Activated CD4-positive, alpha-beta memory T cell treated with anti-CD3 and anti-CD28 coated beads, Interleukin-2, amount 10 ng/mL, durations not matched to agents 7 days and 5 days (primary cell): ENCODE measurements at regions of chr1 and their contacts with region 1.

Region 1: DNA sequence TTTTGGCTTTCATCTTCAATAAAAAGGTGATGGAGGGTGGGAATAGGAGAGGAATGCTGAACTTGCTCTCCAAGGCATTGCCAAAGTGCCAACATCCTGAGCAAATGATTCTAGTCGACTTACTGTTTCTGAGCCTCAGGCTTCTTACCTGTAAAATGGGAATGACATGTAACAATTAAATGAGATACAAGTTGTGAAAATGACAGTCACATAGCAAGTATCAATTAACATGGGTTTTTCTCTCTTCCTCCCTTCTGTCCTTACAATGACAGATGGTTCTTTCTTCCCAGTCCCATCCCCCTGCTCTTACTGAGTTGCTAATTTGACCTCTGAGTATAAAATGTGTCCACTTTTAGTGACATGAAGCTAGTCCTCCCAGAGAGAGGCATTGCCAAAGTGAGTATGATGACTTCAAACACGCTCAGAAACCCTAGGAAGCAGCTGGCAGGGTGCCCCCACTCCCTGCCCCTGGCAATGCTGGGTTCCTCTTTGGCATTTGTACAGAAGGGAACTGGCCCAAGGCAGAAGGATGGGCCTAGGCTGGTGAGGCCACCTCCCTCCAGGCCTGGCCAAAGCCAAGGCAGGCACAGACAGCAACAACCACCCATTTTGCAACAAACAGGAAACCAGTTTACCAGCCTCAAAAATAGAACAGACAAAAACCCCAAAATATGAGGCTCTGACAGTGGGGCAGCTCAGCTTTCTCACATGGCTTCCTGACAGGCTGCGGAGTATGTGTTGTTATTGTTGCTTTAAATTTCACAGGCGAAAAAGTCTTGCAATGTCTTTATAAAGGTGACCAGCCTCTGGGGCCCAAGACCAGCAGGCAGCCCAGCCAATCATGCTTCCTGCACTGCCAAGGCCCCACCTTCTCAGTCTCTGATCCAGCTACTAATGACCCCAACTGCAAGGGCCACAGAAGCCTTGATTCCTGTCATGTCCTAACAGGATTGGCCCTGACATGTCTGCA is 115.9 kb downstream of the HIVEP3 start:
- DNase-seq: peak; percentile 61
- H3K4me3 Mint-ChIP-seq: peak overlapping the region; percentile 33
- H3K27ac Mint-ChIP-seq: peak overlapping the region; percentile 89
- H3K4me1 Mint-ChIP-seq: peaks cover 91% of the 10 kb centered on the region
- H3K27me3 Mint-ChIP-seq: no peaks in the 10 kb centered on the region

Region 2: DNA sequence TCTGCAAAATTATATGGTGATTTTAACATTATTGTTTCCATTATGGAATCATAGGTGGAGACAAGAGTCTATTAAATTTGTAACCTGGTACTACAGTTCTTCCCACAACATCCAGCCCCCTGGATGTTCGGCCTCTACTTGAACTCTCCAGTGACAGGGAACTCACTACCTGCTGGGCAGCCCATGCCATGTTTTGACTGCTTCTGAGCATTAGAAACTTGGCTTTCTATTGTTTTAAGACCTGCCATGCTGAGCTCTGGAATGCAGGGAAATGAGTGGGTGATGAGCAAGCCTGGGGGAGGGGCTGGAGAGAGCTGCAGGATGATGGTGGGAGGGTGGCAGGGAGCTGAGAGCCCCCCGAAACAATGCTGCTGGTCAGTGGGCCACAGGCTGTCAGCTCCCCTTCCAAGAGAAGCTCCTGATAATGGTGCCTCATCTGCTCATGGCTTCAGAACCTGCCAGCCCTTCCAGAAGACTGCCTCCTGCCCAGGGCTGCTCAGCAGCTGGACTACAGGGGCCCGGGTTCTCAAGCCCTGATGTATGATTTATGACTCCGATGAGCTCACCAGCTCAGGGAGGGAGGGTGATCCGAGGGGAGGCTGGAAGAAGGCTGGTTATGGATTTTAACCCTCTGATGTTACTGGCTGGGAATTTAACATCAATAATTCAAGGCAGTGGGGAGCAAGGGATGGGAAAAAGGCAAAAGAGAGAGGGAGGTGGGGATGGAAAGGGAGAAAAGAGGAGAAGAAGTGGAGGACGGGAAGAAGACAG is 89.1 kb before region 1 on chr1:
- CTCF ChIA-PET with region 1: no interaction called
- POLR2A ChIA-PET with region 1: no interaction called
- DNase-seq: no peak
- H3K4me3 Mint-ChIP-seq: no peak overlapping the region
- H3K27ac Mint-ChIP-seq: no peak overlapping the region
- H3K4me1 Mint-ChIP-seq: peaks cover 24% of the 10 kb centered on the region
- H3K27me3 Mint-ChIP-seq: no peaks in the 10 kb centered on the region

Region 3: DNA sequence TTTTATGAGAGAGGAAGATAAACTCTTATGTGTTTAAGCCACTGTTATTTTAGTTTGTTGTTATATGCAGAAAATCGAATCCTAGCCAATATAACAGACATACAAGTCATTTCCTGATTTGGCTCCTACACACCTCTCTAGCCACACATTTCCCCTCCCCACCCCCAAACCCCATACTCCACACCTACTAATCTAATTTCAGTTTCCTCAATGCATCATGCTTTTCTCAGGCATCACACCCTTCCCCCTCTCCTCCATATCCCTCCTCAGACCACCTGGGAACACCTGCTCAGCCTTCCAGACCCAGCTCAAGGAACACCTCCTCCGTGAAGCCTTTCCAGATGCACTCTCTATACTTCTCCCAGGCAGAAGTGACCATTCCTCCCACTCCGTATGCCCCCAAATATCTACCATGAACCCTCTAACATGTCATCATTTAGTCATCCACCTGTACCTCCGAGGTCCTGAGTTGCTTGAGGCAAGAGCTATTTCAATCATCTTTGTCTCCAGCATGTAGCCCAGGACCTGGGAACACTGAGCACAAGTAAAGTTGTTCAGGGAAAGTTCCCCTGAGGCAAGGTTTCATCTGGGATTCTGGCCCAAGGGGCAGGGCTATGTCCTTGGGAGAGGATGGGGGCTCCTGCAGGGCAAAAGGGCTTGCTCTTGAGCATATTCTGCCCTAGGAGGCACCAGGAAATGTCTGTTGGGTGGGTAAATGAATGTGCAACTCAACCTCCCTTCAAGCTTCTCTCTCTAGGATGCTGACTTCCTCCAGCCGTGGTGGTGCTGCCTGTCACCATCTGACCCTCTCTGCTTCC is 10.9 kb before region 1 on chr1:
- CTCF ChIA-PET with region 1: interaction called, 24 read pairs
- POLR2A ChIA-PET with region 1: interaction called, 53 read pairs
- DNase-seq: peak; percentile 63
- H3K4me3 Mint-ChIP-seq: peak overlapping the region; percentile 53
- H3K27ac Mint-ChIP-seq: peak overlapping the region; percentile 93
- H3K4me1 Mint-ChIP-seq: peaks cover 57% of the 10 kb centered on the region
- H3K27me3 Mint-ChIP-seq: no peaks in the 10 kb centered on the region